CD4-positive, alpha-beta T cell (primary cell): ENCODE measurements at regions of chr9 and their contacts with region 1.

Region 1: DNA sequence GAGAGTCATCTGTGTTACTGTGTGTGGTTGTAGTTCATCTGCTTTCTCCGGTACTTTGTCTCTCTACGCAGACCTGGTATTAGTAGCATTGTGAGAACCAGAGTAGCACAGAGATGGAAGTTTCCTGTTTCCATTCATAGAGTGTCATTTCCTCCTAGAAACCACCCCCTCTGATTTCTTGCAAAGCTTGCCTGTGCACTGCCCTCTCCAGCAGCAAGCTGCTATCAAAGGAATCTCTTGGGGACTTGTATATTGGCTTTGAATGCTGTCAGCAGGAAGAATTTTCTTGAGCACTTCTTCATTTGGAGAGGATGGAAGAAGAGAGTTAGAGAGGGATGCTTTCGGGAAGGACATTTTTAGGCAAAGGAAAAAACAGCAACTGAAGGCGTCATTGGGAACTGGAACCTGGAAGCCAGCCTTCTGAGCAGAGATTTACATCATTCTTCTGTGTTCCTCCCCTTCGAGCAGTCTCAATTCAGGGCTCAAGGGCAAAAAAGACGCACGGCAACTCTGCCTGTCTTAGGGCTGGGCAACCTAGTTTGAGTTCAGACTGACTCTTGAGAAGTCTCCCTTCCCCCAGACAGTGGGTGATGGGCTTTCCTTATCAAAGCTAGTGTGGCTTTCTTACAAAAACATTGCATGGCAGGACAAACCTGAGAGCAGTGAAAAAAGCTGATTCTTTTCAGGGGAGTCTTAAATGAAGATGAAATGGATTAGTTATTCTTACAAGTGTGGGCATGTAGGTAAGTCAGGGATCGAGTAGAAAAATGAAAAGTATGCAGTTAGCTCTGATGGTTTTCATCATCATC is 226.3 kb downstream of the AOPEP start:
- DNase-seq: peak in 5 of 14 experiments; percentile 3 to 54 (median 18)
- ATAC-seq: peak; percentile 94
- H3K4me3 ChIP-seq: no peak overlapping the region
- H3K4me3 Mint-ChIP-seq: peak overlapping the region; percentile 30
- H3K27ac ChIP-seq: no peak overlapping the region
- H3K27ac Mint-ChIP-seq: peak overlapping the region; percentile 38
- H3K4me1 ChIP-seq: peaks cover 27% of the 10 kb centered on the region
- H3K4me1 Mint-ChIP-seq: peaks cover 41% of the 10 kb centered on the region
- H3K27me3 ChIP-seq: no peaks in the 10 kb centered on the region
- H3K27me3 Mint-ChIP-seq: no peaks in the 10 kb centered on the region
- CTCF ChIP-seq: no peak

Region 2: GRCh38 chr9:94860968-94861871 is 91.5 kb before region 1 on chr9:
- CTCF ChIA-PET with region 1: no interaction called
- POLR2A ChIA-PET with region 1: interaction called, 3 read pairs
- intact Hi-C with region 1: loop called in 1 of 2 experiments (anchors 1 kb)
- DNase-seq: peak; percentile 45 to 93 (median 61)
- ATAC-seq: peak; percentile 88
- H3K4me3 ChIP-seq: peak overlapping the region; percentile 36
- H3K4me3 Mint-ChIP-seq: peak overlapping the region; percentile 62
- H3K27ac ChIP-seq: peak overlapping the region in 1 of 2 donors; percentile 9
- H3K27ac Mint-ChIP-seq: peak overlapping the region; percentile 79
- H3K4me1 ChIP-seq: peaks cover 29% of the 10 kb centered on the region
- H3K4me1 Mint-ChIP-seq: peaks cover 47% of the 10 kb centered on the region
- H3K27me3 ChIP-seq: no peaks in the 10 kb centered on the region
- H3K27me3 Mint-ChIP-seq: no peaks in the 10 kb centered on the region
- CTCF ChIP-seq: no peak

Region 3: DNA sequence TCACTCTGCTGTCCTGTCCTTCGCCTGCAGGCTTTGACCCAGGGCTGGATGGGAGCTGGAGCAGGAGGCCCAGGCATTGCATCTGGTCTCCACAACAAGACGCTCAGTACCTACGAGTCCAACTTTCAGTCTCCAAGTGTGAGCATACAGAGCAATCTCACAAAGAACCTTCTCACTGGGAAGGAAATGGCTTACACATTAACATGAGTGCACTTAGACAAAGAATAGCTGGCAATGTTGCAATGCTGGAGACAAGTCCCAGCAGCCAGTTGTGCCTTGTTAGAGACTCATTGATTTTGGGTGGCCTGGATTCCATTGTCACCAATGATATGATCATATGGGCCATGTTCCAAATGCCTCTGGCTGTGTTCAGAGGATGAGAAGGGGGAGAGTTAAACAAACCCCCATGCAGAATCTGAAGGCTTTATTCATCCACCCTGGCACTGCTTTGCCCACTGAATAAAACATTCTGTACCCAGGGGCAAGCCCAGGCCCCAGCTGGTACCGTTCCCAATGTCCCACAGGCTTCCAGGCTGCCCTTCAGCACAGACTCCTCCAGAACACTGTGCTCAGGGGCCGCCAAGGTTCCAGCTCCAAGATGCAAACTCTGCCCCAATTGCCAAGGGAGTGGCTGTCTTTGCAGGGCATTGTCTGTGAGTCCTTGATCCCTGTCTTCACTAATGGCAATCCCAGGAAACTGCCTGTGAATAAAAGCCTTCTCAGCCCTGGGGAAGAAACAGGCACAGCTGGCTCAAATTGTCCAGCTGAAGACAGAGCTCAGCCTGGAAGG is 1163.7 kb after region 1 on chr9:
- CTCF ChIA-PET with region 1: no interaction called
- POLR2A ChIA-PET with region 1: no interaction called
- intact Hi-C with region 1: no loop called
- DNase-seq: no peak
- ATAC-seq: no peak
- H3K4me3 ChIP-seq: no peak overlapping the region
- H3K4me3 Mint-ChIP-seq: no peak overlapping the region
- H3K27ac ChIP-seq: no peak overlapping the region
- H3K27ac Mint-ChIP-seq: no peak overlapping the region
- H3K4me1 ChIP-seq: no peaks in the 10 kb centered on the region
- H3K4me1 Mint-ChIP-seq: no peaks in the 10 kb centered on the region
- H3K27me3 ChIP-seq: peaks cover under 1 to 5% of the 10 kb centered on the region in 2 experiments
- H3K27me3 Mint-ChIP-seq: peaks cover 39% of the 10 kb centered on the region
- CTCF ChIP-seq: no peak